MCF 10A (cell line): ENCODE measurements at regions of chr4 and their contacts with region 1.

Region 1: DNA sequence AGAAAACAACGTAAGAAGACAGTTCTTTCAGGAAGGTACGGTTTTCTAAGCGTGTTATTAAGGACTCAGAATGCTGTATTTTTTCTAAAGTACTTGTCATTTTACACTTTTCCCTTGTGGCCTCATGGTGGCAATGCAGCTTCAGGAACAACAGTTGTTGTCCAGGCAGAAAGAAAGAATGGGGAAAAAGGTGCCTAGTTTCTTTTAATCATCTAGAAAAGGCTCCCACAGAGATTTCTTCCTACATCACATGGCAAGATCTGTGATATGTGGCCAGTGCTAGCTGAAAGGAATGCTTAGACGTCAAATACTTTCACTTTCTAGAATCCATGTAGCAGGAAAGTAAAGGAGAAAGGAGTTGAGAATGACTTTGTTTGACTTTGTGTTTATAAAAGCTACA is 49.0 kb upstream of the TRAM1L1 start:
- DNase-seq: peak; percentile 71
- H3K4me3 Mint-ChIP-seq: no peak overlapping the region
- H3K27ac Mint-ChIP-seq: peak overlapping the region; percentile 23
- H3K4me1 Mint-ChIP-seq: peaks cover 13% of the 10 kb centered on the region
- H3K27me3 Mint-ChIP-seq: no peaks in the 10 kb centered on the region
- CTCF ChIP-seq: peak; percentile 53

Region 2: GRCh38 chr4:116180157-116180601 is 954.2 kb before region 1 on chr4:
- CTCF ChIA-PET with region 1: interaction called, 5 read pairs
- POLR2A ChIA-PET with region 1: no interaction called
- intact Hi-C with region 1: loop called (anchors 1 kb)
- DNase-seq: peak; percentile 46
- H3K4me3 Mint-ChIP-seq: no peak overlapping the region
- H3K27ac Mint-ChIP-seq: no peak overlapping the region
- H3K4me1 Mint-ChIP-seq: no peaks in the 10 kb centered on the region
- H3K27me3 Mint-ChIP-seq: peaks cover 15% of the 10 kb centered on the region
- CTCF ChIP-seq: peak; percentile 52

Region 3: DNA sequence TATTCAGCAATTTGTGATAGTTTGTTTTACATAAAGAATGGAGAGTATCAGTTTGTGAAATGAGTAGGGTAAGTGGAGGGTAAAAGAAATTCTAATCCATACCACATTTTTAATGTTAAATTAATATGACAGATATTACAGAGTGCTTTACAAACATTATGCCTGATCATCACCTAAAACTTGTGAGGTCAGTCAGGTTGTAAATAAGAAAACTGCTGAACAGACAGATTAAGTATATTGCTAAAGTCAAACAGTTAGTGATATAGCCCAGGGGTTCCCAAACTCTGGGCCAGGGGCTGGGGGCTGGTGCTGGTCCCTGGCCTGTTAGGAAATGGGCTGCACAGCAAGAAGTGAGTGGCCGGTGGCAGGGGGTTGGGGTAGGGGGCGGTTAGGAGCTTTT is 322.7 kb before region 1 on chr4:
- CTCF ChIA-PET with region 1: no interaction called
- POLR2A ChIA-PET with region 1: no interaction called
- intact Hi-C with region 1: no loop called
- DNase-seq: no peak
- H3K4me3 Mint-ChIP-seq: no peak overlapping the region
- H3K27ac Mint-ChIP-seq: no peak overlapping the region
- H3K4me1 Mint-ChIP-seq: no peaks in the 10 kb centered on the region
- H3K27me3 Mint-ChIP-seq: no peaks in the 10 kb centered on the region
- CTCF ChIP-seq: no peak

Region 4: GRCh38 chr4:117376692-117377091 is 242.3 kb after region 1 on chr4:
- CTCF ChIA-PET with region 1: no interaction called
- POLR2A ChIA-PET with region 1: no interaction called
- intact Hi-C with region 1: no loop called
- DNase-seq: no peak
- H3K4me3 Mint-ChIP-seq: no peak overlapping the region
- H3K27ac Mint-ChIP-seq: no peak overlapping the region
- H3K4me1 Mint-ChIP-seq: no peaks in the 10 kb centered on the region
- H3K27me3 Mint-ChIP-seq: no peaks in the 10 kb centered on the region
- CTCF ChIP-seq: no peak

Region 5: GRCh38 chr4:117560329-117560728 is 425.9 kb after region 1 on chr4:
- CTCF ChIA-PET with region 1: interaction called, 54 read pairs
- POLR2A ChIA-PET with region 1: interaction called, 4 read pairs
- intact Hi-C with region 1: loop called (anchors 1 kb)
- DNase-seq: peak; percentile 45
- H3K4me3 Mint-ChIP-seq: no peak overlapping the region
- H3K27ac Mint-ChIP-seq: no peak overlapping the region
- H3K4me1 Mint-ChIP-seq: no peaks in the 10 kb centered on the region
- H3K27me3 Mint-ChIP-seq: no peaks in the 10 kb centered on the region
- CTCF ChIP-seq: peak; percentile 18

Region 6: GRCh38 chr4:118034053-118034785 is 899.8 kb after region 1 on chr4 and contains the start of gene NDST3:
- CTCF ChIA-PET with region 1: interaction called, 25 read pairs
- POLR2A ChIA-PET with region 1: no interaction called
- intact Hi-C with region 1: loop called (anchors 1 kb)
- DNase-seq: peak; percentile 88
- H3K4me3 Mint-ChIP-seq: peak within 1 kb of the TSS; percentile 64
- H3K27ac Mint-ChIP-seq: no peak within 1 kb of the TSS
- H3K4me1 Mint-ChIP-seq: no peaks in the 10 kb centered on the region
- H3K27me3 Mint-ChIP-seq: peaks cover 4% of the 10 kb centered on the region
- CTCF ChIP-seq: peak; percentile 63
- total RNA-seq, gene NDST3: not detected in 2 replicates

Region 7: DNA sequence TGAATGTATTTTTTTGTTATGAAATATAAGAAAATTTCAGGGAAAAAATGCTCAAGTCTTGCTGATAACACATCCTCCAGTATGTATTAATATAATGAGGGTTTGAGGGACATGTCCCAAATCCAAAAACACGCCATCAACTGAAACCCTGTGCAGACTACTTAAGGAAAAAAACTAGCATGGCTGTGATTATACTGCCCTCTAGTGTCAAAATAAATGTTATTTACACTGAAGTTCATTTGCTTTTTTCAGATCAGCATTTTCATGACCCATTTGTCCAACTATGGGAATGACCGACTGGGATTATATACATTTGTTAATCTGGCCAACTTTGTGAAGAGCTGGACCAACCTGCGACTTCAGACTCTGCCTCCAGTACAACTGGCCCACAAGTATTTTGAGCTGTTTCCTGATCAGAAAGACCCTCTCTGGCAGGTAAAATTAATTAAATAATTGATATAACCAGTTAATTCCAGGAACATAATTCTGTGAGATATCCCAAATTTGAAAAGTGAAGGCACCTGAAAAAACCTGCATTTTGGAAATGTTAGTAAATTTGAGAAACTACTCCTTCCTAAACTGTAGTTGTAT is 1089.9 kb after region 1 on chr4:
- CTCF ChIA-PET with region 1: interaction called, 15 read pairs
- POLR2A ChIA-PET with region 1: no interaction called
- intact Hi-C with region 1: loop called (anchors 1 kb)
- DNase-seq: peak; percentile 75
- H3K4me3 Mint-ChIP-seq: no peak overlapping the region
- H3K27ac Mint-ChIP-seq: no peak overlapping the region
- H3K4me1 Mint-ChIP-seq: no peaks in the 10 kb centered on the region
- H3K27me3 Mint-ChIP-seq: no peaks in the 10 kb centered on the region
- CTCF ChIP-seq: peak; percentile 70